WTC11 (cell line): ENCODE measurements at regions of chr2 and their contacts with region 1.

Region 1: DNA sequence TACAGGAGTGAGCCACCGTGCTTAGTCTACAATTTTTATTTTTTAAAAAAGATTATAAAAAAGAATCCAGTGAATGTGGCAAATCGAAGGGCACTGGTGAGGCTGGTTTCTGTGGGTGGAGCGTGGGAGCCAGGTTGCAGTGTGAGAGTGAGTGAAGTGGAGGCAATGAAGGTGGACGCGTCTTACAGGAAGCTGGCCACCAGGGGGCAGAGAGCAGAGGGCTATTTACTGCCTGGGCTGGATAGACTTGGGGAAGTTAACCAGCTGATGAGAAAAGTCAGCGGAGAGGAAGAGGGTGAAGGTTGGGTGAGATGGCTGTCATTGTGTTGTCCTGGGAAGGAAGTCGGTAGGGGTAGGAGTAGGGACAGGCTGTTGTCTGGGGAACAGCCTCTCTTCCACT is 6.8 kb downstream of the SCTR start:
- DNase-seq: peak; percentile 82
- ATAC-seq: peak; percentile 92
- H3K4me3 Mint-ChIP-seq: no peak overlapping the region
- H3K27ac Mint-ChIP-seq: no peak overlapping the region
- H3K4me1 Mint-ChIP-seq: no peaks in the 10 kb centered on the region
- H3K27me3 Mint-ChIP-seq: peaks cover 38% of the 10 kb centered on the region
- CTCF ChIP-seq: peak; percentile 78; the same call in 1 of the 2 replicates

Region 2: DNA sequence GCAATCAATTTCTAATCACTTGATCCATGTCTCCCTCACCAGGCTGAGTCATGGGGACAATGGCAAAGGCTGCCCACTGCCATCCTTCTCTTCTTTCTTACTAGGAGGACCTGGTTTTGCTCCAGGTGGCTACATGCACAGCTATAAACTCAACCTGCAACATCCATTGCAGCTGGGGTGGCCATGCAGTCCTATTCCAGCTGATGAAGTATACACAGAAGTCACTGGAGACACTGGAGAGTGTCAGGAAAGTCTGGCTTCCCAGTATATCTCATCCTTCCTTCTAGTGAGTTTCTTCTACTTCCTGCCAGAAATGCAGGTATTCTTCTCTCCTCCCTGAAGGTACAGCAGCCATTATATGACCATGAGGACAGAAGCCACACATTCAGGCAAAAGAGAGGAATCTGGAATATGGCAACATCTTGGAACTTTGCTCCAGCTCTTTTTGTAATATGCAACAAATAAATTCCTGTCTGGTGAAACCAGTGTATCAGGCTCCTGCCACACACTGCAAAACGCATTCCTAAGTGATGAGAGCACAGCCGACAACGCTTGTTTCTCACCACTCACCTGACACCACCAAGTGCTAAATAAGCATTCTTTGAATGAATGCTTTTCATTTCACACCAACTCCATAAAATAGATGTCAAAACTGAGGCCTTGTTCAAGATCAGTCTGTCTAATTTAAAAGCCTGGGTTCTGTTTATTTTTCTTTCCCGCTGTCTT is 25.5 kb before region 1 on chr2:
- CTCF ChIA-PET with region 1: interaction called, 19 read pairs
- POLR2A ChIA-PET with region 1: interaction called, 5 read pairs
- DNase-seq: no peak
- ATAC-seq: peak; percentile 64
- H3K4me3 Mint-ChIP-seq: no peak overlapping the region
- H3K27ac Mint-ChIP-seq: peak overlapping the region; percentile 58; the same call in 1 of the 2 replicates
- H3K4me1 Mint-ChIP-seq: peaks cover 21% of the 10 kb centered on the region
- H3K27me3 Mint-ChIP-seq: peaks cover 5% of the 10 kb centered on the region
- CTCF ChIP-seq: no peak